ENCODE measurements at regions of chr1 and their contacts with region 1.

Region 1: DNA sequence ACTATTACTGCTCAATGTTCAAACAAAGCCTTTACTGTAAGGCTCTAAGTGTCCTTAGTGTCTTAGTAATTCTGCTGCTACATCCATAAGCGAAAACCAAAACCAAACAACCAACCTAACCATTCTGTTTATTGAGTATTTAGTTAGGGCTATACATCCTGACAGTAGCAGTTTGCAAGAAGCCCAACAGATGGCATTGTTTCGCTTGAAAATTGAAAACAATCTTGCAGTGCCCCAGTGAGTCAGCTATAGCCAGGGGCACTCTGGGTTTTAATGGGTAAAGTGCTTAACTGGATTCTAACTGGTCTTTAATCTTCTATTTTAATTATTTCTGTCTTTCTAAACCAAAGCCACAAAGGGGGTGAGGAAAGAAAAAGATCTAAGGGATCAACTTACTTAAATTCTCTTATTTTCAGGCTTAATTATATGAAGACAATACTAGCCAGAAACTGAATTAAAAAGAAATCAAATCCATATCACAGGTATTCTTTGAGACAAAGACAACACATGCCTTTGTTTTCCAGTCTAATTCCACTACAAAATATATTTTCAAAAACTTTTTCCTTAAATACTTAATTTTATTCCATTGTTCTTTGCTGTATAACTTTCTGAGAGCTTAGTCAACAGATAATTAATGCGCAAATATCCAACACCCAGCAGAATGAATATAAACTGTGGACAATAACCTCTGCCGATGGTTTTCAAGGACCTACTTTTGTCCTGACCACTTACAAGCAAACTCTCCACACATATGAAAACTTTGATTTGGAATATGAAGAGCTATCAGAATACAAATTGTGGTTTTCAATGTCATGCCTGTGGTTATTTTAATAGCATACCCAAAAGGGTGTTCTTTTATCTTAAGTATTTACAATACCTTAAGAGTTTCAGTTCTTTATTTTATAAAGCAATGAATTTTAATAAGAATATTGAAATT is 15.2 kb downstream of the POGZ start:
- DNase-seq: peak; percentile 50
- H3K4me3 Mint-ChIP-seq: no peak overlapping the region
- H3K27ac Mint-ChIP-seq: no peak overlapping the region
- H3K4me1 Mint-ChIP-seq: peaks cover 36% of the 10 kb centered on the region
- H3K27me3 Mint-ChIP-seq: no peaks in the 10 kb centered on the region

Region 2: GRCh38 chr1:151510957-151511635 is 67.0 kb after region 1 on chr1 and contains the start of gene CGN:
- intact Hi-C with region 1: loop called (anchors 2 kb)
- DNase-seq: peak; percentile 85
- H3K4me3 Mint-ChIP-seq: peak within 1 kb of the TSS; percentile 85
- H3K27ac Mint-ChIP-seq: peak within 1 kb of the TSS; percentile 47
- H3K4me1 Mint-ChIP-seq: peaks cover 32% of the 10 kb centered on the region
- H3K27me3 Mint-ChIP-seq: peaks cover 21% of the 10 kb centered on the region
- total RNA-seq, gene CGN: 0.17 and 0.91 TPM in 2 replicates

Region 3: DNA sequence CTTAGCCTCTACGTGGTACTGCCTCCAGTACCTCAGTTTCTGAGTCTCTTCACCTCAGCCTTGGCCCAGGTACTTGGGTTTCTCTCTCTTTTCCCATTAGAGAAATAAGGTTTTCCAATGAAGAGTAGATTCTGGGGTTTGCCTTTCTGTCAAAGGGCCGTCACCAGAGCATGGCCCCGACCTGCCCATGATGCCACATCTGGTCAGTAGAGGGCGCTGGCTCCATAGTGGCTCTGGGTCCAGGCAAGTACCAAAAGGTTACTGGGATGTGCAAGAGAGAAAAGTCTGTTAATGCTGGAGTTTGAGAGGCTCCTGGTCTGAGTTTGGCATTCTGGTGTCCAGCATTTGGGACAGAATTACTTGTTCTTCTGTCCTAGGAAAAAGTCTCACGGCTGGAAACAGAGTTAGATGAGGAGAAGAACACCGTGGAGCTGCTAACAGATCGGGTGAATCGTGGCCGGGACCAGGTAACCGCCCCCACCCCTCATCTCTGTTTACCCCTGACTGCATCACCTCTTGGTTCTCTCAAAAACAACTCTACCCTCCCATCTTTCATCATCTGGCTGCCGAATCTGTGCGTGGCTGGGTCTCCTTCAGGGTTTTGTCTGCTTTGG is 90.7 kb after region 1 on chr1:
- intact Hi-C with region 1: loop called (anchors 1 kb)
- DNase-seq: peak; percentile 67
- H3K4me3 Mint-ChIP-seq: no peak overlapping the region
- H3K27ac Mint-ChIP-seq: no peak overlapping the region
- H3K4me1 Mint-ChIP-seq: no peaks in the 10 kb centered on the region
- H3K27me3 Mint-ChIP-seq: peaks cover 5% of the 10 kb centered on the region

Region 4: GRCh38 chr1:151594143-151594625 is 150.1 kb after region 1 on chr1:
- intact Hi-C with region 1: loop called (anchors 1 kb)
- DNase-seq: peak; percentile 75
- H3K4me3 Mint-ChIP-seq: peak overlapping the region; percentile 52
- H3K27ac Mint-ChIP-seq: no peak overlapping the region
- H3K4me1 Mint-ChIP-seq: peaks cover 12% of the 10 kb centered on the region
- H3K27me3 Mint-ChIP-seq: peaks cover 8% of the 10 kb centered on the region

Measured in activated T-helper 1 cell treated with anti-CD3 and anti-CD28 coated beads, Interleukin-12 subunit alpha, Interleukin-12 subunit beta, Interleukin-2, Interleukin-4 antibody, amounts not matched to agents 30 ng/mL and 10 ng/mL and 1 ng/mL, durations not matched to agents 14 hours and 24 hours and 36 hours (primary cell).